OCI-LY7 (cell line): ENCODE measurements at regions of chr1 and their contacts with region 1.

Region 1: GRCh38 chr1:155250633-155251449 is 4.4 kb downstream of the ENTREP3 start:
- DNase-seq: peak; percentile 95
- H3K4me3 ChIP-seq: peak overlapping the region; percentile 65
- H3K27ac ChIP-seq: no peak overlapping the region
- H3K4me1 ChIP-seq: peaks cover 31% of the 10 kb centered on the region
- CTCF ChIP-seq: peak; percentile 99

Region 2: DNA sequence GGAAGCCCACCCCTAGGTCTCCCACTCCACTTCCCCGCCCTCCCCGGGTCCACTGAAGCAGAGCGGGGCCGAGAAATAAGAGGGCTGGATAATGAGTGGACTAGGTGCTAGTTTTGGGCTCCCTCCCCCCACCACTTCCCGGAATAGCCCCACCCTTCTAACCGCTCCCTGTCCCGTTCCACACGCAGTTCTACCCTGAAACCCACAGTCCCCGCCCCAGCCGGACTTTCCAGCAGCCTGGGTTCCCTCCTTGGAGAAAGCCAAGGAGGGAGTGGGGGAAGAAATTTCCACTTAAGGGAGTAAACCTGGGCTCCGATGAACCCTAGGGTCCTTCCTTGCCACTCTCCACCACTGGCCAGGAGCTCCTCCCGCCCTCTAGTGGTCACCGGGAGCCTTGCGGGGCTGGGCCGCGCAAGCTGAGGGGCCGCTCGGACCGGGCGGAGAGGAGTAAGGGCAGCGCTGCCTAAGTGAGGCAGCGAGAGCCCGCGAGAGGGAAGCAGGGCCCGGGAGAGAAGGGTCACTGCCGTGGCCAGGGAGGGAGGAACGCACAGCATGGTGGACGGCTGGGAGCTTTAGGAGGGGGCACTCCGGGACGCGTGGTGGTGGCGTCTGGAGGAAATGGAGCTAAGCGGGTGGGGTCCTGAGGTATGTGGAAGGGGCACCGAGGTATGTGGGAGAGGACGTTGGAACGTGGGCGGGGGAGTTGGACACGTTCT is 57.4 kb before region 1 on chr1:
- CTCF ChIA-PET with region 1: no interaction called
- POLR2A ChIA-PET with region 1: no interaction called
- intact Hi-C with region 1: no loop called
- DNase-seq: peak; percentile 74
- H3K4me3 ChIP-seq: peak overlapping the region; percentile 29
- H3K27ac ChIP-seq: no peak overlapping the region
- H3K4me1 ChIP-seq: peaks cover 15% of the 10 kb centered on the region
- CTCF ChIP-seq: peak; percentile 96

Region 3: GRCh38 chr1:155261852-155262673 is 11.2 kb after region 1 on chr1 and contains the start of gene SCAMP3:
- CTCF ChIA-PET with region 1: interaction called, 10 read pairs
- POLR2A ChIA-PET with region 1: interaction called, 4 read pairs
- intact Hi-C with region 1: no loop called
- DNase-seq: peak; percentile 96
- H3K4me3 ChIP-seq: peak within 1 kb of the TSS; percentile 84
- H3K27ac ChIP-seq: peak within 1 kb of the TSS; percentile 51
- H3K4me1 ChIP-seq: peaks cover 17% of the 10 kb centered on the region
- CTCF ChIP-seq: no peak
- total RNA-seq, gene SCAMP3: 45.4 and 58.3 TPM in 2 replicates

Region 4: DNA sequence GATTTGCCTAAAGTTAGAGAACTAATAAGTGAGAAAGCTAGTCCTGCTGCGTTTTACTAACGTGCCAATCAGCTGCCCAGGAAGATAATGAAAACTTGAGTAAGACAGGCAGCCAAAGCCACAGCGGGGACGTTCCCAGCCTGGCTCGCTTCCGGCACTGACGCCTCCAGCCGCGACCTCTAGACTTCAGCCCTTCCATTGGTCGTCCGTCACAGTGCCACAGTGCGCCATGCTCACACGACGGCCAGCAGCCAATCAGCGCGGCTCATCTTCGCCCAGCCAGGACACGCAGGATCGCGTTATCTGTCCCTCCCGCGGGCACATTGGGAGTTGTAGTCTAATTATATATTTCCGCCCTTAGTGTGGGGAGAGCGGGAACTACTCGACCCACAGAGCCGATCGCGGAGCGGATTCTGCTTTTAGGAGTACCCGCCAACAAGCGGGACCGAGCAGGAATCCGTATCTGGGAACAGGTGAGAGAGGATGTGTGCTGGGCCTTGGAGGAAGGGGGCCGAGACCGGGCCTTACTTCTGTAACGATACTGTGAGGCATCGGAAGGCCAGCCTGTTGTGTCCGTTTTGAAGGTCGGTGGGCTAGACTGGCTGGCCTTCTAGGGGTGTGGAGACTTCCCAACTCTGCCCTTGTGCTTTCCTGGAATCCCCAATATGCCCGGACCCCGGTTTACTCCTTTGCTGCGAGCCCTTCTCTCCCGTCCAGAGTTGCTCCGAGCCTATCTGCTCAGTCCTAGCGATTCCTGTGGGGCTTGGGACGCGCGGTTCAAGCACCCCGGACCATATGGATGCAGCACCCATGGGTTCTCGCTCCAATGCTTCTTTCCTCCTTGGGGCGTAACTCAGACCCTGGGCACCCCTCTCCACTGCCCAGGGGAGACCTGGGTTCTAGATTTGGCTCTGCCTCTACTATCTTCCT is 57.9 kb after region 1 on chr1 and contains the start of gene FDPS:
- CTCF ChIA-PET with region 1: interaction called, 6 read pairs
- POLR2A ChIA-PET with region 1: interaction called, 7 read pairs
- intact Hi-C with region 1: loop called (anchors 1 kb)
- DNase-seq: peak; percentile 99
- H3K4me3 ChIP-seq: peak within 1 kb of the TSS; percentile 93
- H3K27ac ChIP-seq: peak within 1 kb of the TSS; percentile 88
- H3K4me1 ChIP-seq: peaks cover 26% of the 10 kb centered on the region
- CTCF ChIP-seq: no peak
- total RNA-seq, gene FDPS: 254 and 263 TPM in 2 replicates

Region 5: DNA sequence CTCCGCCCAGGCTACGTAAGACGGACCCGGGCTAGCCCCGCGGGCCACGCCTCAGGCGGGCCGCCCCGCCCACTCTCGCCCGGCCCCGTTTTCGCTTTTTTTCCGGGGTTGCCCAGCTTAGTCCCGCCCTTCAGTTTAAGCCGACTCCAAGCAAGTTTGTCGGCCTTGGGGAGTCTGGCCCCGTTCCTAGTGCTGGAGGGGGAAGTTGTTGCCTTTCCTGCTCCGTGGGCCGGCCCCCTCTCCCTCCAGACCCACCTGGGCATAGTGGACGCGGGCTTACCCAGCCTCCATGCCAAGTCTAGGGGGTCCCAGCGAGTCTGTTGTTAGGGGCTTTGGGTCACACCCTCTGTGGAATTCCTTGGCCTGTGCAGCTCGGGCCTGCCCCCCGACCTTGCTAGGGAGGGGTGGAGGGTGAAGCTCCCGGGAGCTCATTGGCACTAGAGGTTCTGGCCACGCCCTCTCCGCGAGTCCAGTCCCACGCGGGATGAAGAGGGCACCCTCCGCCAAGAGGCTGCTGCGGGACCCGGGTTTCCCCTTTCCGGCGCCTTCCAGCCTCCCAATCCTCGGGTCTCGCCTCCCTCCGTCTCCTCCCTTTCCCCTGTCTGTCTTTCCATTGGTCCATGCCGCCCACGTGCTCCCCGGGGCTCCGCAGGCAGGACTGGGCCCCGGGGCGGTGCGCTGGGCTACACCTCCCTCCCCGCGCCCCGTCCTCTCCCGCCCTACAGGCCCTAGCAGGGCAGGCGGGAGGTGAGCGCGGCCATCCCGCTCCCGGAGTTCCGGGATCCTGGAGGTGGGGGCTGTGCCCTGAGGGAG is 73.2 kb after region 1 on chr1:
- CTCF ChIA-PET with region 1: interaction called, 4 read pairs
- POLR2A ChIA-PET with region 1: no interaction called
- intact Hi-C with region 1: loop called (anchors 1 kb)
- DNase-seq: peak; percentile 83
- H3K4me3 ChIP-seq: peak overlapping the region; percentile 78
- H3K27ac ChIP-seq: peak overlapping the region; percentile 53
- H3K4me1 ChIP-seq: peaks cover 23% of the 10 kb centered on the region
- CTCF ChIP-seq: no peak

Region 6: GRCh38 chr1:155504207-155504606 is 253.4 kb after region 1 on chr1:
- CTCF ChIA-PET with region 1: interaction called, 3 read pairs
- POLR2A ChIA-PET with region 1: interaction called, 3 read pairs
- intact Hi-C with region 1: loop called (anchors 2 kb)
- DNase-seq: peak; percentile 66
- H3K4me3 ChIP-seq: no peak overlapping the region
- H3K27ac ChIP-seq: no peak overlapping the region
- H3K4me1 ChIP-seq: peaks cover 52% of the 10 kb centered on the region
- CTCF ChIP-seq: peak; percentile 79

Region 7: GRCh38 chr1:155591770-155592169 is 340.9 kb after region 1 on chr1:
- CTCF ChIA-PET with region 1: interaction called, 3 read pairs
- POLR2A ChIA-PET with region 1: interaction called, 3 read pairs
- intact Hi-C with region 1: loop called (anchors 1 kb)
- DNase-seq: peak; percentile 80
- H3K4me3 ChIP-seq: no peak overlapping the region
- H3K27ac ChIP-seq: no peak overlapping the region
- H3K4me1 ChIP-seq: no peaks in the 10 kb centered on the region
- CTCF ChIP-seq: peak; percentile 80